Common myeloid progenitor, CD34-positive (primary cell): ENCODE measurements at regions of chr17 and their contacts with region 1.

Region 1: GRCh38 chr17:34361478-34362061 is 1.5 kb downstream of the CCL1 start:
- DNase-seq: peak; percentile 90 to 95 (median 93)
- H3K4me3 ChIP-seq: no peak overlapping the region
- H3K27ac ChIP-seq: no peak overlapping the region
- H3K4me1 ChIP-seq: peaks cover 17 to 53% (median 41%) of the 10 kb centered on the region in 4 experiments
- H3K27me3 ChIP-seq: no peaks in the 10 kb centered on the region

Region 2: GRCh38 chr17:33927732-33928133 is 433.8 kb before region 1 on chr17:
- CTCF ChIA-PET with region 1: interaction called, 11 read pairs
- POLR2A ChIA-PET with region 1: no interaction called
- DNase-seq: peak; percentile 45 to 73 (median 65)
- H3K4me3 ChIP-seq: no peak overlapping the region
- H3K27ac ChIP-seq: no peak overlapping the region
- H3K4me1 ChIP-seq: no peaks in the 10 kb centered on the region
- H3K27me3 ChIP-seq: peaks cover 0 to 4% (median 0%) of the 10 kb centered on the region in 5 experiments

Region 3: DNA sequence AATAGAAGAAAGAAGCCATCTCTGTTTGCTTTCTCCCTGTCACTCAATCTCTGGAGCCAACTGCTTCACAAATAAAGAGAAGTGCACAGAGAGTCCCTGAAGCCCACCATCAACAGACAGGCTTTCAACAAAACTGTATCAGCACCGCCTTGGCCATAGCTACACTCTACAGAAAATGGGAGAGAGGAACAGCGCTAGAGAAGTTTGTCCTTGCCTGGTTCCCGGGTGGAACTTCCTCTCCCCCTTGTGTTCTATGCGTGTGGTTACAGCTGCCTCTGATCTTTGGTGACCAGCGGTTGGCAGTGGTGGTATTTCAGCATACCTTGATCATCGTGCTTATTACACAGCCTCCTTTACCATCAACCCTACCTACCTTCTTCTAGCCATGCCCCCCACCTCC is 197.9 kb before region 1 on chr17:
- CTCF ChIA-PET with region 1: interaction called, 21 read pairs
- POLR2A ChIA-PET with region 1: no interaction called
- DNase-seq: peak; percentile 51 to 63 (median 62)
- H3K4me3 ChIP-seq: no peak overlapping the region
- H3K27ac ChIP-seq: no peak overlapping the region
- H3K4me1 ChIP-seq: peaks cover 0 to 16% (median 2%) of the 10 kb centered on the region in 4 experiments
- H3K27me3 ChIP-seq: peaks cover 0 to 10% (median 0%) of the 10 kb centered on the region in 5 experiments

Region 4: DNA sequence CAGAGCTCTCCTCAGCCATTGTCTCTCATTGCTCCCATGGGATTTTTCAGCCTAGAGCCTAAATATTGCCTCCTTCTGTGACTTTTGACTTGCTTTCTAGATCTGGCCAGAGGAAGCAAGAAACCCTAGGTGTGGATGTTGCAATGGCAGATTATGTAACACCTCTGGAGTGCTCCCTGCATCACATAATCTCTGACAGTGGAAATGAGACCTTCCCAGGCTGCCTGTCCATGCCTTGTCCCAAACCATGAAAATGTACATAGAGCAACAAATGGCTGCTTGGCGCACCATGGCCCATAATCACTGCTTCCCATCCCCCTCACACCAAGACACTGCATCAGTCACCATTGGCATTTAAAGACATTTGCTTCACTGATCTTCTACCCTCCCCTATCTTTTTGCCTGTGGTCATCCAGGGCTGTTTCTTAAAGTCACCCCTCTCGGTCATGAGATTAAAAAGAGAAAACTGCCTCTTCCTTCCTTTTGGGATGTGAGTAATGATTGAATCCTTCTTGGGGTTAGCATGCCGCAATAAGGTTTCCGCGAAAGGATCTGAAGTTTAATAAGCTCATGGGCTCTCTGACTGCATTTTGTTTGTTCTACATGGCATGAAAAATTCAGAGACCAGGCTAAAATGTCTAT is 140.7 kb before region 1 on chr17:
- CTCF ChIA-PET with region 1: interaction called, 17 read pairs
- POLR2A ChIA-PET with region 1: no interaction called
- DNase-seq: peak in 2 of 3 donors; percentile 24 to 27
- H3K4me3 ChIP-seq: no peak overlapping the region
- H3K27ac ChIP-seq: no peak overlapping the region
- H3K4me1 ChIP-seq: peaks cover 0 to 5% (median 1%) of the 10 kb centered on the region in 4 experiments
- H3K27me3 ChIP-seq: no peaks in the 10 kb centered on the region

Region 5: GRCh38 chr17:34254651-34255380 is 106.8 kb before region 1 on chr17 and contains the start of gene CCL2:
- CTCF ChIA-PET with region 1: interaction called, 21 read pairs
- POLR2A ChIA-PET with region 1: no interaction called
- DNase-seq: peak; percentile 22 to 40 (median 38)
- H3K4me3 ChIP-seq: peak within 1 kb of the TSS in 1 of 7 experiments; percentile 59
- H3K27ac ChIP-seq: no peak within 1 kb of the TSS
- H3K4me1 ChIP-seq: peaks cover 3 to 38% (median 31%) of the 10 kb centered on the region in 4 experiments
- H3K27me3 ChIP-seq: peaks cover 0 to under 1% (median 0%) of the 10 kb centered on the region in 5 experiments

Region 6: GRCh38 chr17:34398990-34399389 is 37.4 kb after region 1 on chr17:
- CTCF ChIA-PET with region 1: interaction called, 12 read pairs
- POLR2A ChIA-PET with region 1: no interaction called
- DNase-seq: peak in 2 of 3 donors; percentile 78 to 84
- H3K4me3 ChIP-seq: no peak overlapping the region
- H3K27ac ChIP-seq: no peak overlapping the region
- H3K4me1 ChIP-seq: peaks cover 8 to 26% (median 12%) of the 10 kb centered on the region in 4 experiments
- H3K27me3 ChIP-seq: peaks cover 0 to 3% (median 0%) of the 10 kb centered on the region in 5 experiments

Region 7: GRCh38 chr17:34525651-34526050 is 164.1 kb after region 1 on chr17:
- CTCF ChIA-PET with region 1: no interaction called
- POLR2A ChIA-PET with region 1: no interaction called
- DNase-seq: no peak
- H3K4me3 ChIP-seq: no peak overlapping the region
- H3K27ac ChIP-seq: no peak overlapping the region
- H3K4me1 ChIP-seq: no peaks in the 10 kb centered on the region
- H3K27me3 ChIP-seq: peaks cover 0 to 29% (median 10%) of the 10 kb centered on the region in 5 experiments